K562 (cell line): ENCODE measurements at regions of chr22 and their contacts with region 1.

Region 1: DNA sequence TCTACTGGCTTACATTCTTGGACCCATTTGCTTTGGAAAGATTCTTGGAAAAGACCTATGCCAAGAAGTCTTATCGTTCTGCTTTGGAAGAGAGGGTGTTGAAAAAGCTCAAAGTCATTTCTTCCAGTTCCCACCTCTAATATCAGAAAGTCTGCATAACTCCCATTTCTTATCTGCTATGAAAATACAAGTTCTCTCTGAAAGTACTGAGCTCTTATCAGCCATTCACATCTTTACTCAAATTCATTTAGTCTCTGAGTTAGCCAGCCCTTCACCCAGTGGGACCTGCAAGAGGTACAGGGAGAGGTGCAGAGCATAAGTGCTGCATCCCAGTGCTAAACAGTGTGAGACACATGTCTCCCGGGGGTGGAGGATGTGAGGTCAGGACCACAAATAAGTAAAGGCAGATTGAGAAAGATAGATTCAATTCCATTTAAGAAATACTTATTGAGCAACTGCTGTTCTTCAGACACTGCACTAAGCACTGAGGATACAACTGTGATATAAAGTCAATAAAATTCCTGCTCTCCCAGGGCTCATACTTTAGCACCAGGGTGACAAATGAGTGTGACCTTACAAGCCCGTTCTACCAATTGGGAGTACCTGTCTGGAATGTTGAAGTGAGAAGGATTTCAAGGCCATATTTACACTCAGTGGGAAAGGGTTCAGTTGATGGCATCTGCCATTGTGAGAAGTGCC is 76.7 kb downstream of the PISD start:
- DNase-seq: peak; percentile 53 to 77 (median 62)
- ATAC-seq: peak; percentile 85
- H3K4me3 ChIP-seq: no peak overlapping the region
- H3K27ac ChIP-seq: peak overlapping the region; percentile 72
- H3K4me1 ChIP-seq: peaks cover 9 to 32% of the 10 kb centered on the region in 2 experiments
- H3K27me3 ChIP-seq: no peaks in the 10 kb centered on the region
- CTCF ChIP-seq: no peak
- EP300 ChIP-seq: peak; percentile 79
- POLR2A ChIP-seq: no peak
- RAD21 ChIP-seq: no peak; a peak in 1 of 4 replicates

Region 2: GRCh38 chr22:31602259-31602952 is 17.1 kb after region 1 on chr22:
- CTCF ChIA-PET with region 1: no interaction called
- POLR2A ChIA-PET with region 1: interaction called, 4 read pairs
- in situ Hi-C with region 1: no loop called
- intact Hi-C with region 1: loop called (anchors 2 kb)
- DNase-seq: no peak
- ATAC-seq: no peak
- H3K4me3 ChIP-seq: no peak overlapping the region
- H3K27ac ChIP-seq: peak overlapping the region; percentile 77; the same call in 2 of the 3 replicates
- H3K4me1 ChIP-seq: peaks cover 19 to 29% of the 10 kb centered on the region in 2 experiments; a peak in 4 of 5 replicates
- H3K27me3 ChIP-seq: no peaks in the 10 kb centered on the region
- CTCF ChIP-seq: no peak
- EP300 ChIP-seq: no peak
- POLR2A ChIP-seq: no peak
- RAD21 ChIP-seq: no peak